Cardiac septum (tissue), 1 donor: ENCODE measurements at regions of chr10 and their contacts with region 1.

Region 1: GRCh38 chr10:68720793-68721672 is at the start of gene CCAR1:
- DNase-seq: peak; percentile 98
- total RNA-seq, gene CCAR1: 29.8 TPM

Region 2: DNA sequence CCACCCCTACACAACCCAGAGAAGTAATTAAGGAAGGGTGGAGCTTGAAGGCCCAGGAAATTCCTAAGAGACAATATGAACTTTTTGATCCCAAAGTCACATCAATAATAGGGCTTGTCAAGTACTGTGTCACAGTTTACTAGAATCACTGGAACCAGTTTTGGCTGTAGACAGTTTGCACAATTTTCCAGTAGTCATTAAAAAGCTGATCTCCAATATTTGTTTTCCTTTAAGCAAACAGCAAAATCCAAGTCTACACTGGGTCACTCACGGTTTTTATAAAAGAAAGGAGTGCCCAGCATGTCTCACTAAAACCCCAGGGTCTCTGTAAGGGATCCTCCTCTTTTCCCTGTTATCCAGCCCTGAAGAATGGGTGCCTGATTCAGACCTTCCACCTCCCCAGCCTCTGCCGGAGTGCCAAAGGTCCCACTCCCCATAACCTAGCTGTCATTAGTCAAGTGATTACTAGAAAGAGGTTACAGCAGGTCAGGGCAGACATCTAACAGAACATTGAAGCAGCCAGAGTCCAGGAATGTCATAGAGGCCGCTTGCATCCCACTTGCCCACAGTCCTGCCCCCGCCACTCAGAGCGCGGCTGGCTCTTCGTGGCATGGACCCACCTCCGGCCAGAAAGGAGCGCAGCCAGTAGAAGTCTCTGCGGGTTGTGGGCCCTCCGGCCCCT is 194.3 kb before region 1 on chr10:
- intact Hi-C with region 1: loop called (anchors 1 kb)
- DNase-seq: no peak

Region 3: DNA sequence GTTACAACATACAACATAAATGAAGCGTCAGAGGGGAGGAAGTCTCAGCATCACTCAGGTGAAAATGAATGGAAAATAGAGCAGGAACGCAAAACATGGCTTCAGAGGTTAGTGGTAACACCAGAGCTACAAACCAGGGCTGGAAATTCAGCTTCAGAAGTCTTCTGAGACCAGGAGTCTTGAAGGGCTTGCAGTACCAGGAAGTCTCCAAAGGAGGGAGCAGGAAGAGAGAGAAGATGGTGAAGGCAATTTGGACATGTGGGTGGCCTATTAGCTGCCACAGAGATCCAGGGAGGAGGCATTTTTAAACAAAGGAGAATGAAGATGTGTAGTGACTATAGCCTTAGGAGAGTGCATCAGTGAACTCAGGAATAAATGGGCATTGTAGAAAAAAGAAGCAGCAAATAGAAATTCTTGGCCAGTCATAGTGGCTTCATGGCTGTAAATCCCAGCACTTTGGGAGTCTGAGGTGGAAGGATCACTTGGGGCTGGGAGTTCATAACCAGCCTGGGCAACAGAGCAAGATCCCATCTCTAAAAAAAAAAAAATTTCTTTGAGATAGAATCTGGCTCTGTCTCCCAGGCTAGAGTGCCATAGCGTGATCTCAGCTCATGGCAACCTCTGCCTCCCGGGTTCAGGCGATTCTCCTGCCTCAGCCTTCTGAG is 170.2 kb before region 1 on chr10:
- intact Hi-C with region 1: loop called (anchors 10 kb)
- DNase-seq: no peak